Activated B cell treated with CpG ODN at 0.5 μM for 24 hours (primary cell): ENCODE measurements at regions of chr14 and their contacts with region 1.

Region 1: DNA sequence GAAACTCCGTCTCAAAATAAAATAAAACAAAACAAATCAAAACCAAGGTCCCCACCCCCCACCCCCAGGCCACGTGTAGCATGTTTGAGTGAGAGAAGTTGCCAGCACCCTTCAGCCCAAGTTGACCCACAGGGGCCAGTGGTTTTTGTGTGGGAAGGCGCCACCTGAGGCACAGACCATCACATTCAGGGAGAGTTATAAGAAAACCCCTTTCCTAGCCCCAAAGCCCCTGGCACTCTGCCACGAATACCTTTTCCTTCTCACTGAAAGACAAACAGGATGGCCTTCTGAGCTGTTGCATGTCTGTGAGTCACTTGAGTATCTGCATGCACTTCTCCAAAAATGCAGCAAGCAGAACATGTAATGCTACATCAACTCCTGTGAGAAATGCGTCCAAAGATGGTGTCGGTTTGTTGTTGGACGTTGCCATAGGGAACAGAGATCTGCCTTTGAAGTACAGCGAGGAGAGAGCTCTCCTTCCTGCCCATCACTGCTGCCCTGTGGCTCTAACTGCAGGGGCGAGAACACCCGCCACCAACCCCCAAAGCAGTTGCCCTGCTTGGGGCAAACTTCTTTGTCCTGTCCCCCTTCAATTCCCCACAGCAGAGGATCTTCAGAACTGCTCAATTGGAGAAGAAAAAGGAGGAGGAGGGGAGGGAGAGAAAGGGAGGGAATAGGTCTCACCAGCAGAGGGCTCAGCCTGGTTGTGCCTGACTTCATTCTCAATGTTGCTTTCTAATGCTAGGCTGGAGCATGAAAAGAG is 2.7 kb upstream of the TRAF3 start:
- DNase-seq: peak; percentile 64
- ATAC-seq: peak; percentile 53
- H3K4me3 Mint-ChIP-seq: peak overlapping the region; percentile 70
- H3K27ac Mint-ChIP-seq: peak overlapping the region; percentile 96
- H3K4me1 Mint-ChIP-seq: peaks cover 76% of the 10 kb centered on the region
- H3K27me3 Mint-ChIP-seq: no peaks in the 10 kb centered on the region
- CTCF ChIP-seq: no peak

Region 2: DNA sequence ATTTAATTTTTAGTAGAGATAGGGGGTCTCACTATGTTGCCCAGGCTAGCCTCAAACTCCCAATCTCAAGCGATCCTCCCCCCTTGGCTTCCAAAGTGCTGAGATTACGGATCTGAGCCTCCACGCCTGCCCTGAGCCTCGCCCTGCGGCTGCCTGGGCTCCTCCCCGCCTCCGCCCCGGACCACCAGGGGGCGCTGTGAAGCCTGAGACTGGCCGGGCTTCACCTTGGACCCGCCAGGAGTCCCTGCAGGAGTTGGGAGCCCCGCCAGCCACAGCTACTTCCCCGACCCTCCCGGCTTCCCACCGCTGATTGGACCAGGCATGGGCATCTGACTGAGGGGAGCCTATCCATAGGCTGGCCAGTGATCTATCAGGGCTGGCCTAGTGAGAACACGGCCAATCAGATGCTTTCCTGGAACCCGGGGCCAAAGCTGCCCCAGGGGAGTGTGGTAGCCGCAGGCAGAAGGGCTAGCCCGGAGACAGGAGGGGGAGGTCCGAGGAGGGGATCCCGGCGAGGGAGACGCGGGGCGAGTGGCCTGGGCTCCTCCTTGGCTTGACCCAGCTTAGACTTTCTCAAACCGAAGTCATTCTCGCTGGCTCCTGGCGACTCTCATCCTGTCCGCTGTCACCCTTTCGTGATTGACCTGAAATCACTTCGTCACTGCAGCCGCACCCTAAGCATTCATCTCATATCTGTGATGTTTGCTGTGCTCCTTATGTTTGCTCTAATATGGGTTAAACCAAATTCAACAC is 249.9 kb before region 1 on chr14:
- CTCF ChIA-PET with region 1: no interaction called
- POLR2A ChIA-PET with region 1: no interaction called
- intact Hi-C with region 1: loop called (anchors 5 kb)
- DNase-seq: peak; percentile 97
- ATAC-seq: peak; percentile 96
- H3K4me3 Mint-ChIP-seq: peak overlapping the region; percentile 91
- H3K27ac Mint-ChIP-seq: peak overlapping the region; percentile 81
- H3K4me1 Mint-ChIP-seq: peaks cover 28% of the 10 kb centered on the region
- H3K27me3 Mint-ChIP-seq: no peaks in the 10 kb centered on the region
- CTCF ChIP-seq: peak; percentile 61

Region 3: GRCh38 chr14:102738756-102739494 is 35.6 kb before region 1 on chr14:
- CTCF ChIA-PET with region 1: no interaction called
- POLR2A ChIA-PET with region 1: interaction called, 4 read pairs
- intact Hi-C with region 1: loop called (anchors 5 kb)
- DNase-seq: no peak
- ATAC-seq: no peak
- H3K4me3 Mint-ChIP-seq: no peak overlapping the region
- H3K27ac Mint-ChIP-seq: no peak overlapping the region
- H3K4me1 Mint-ChIP-seq: no peaks in the 10 kb centered on the region
- H3K27me3 Mint-ChIP-seq: no peaks in the 10 kb centered on the region
- CTCF ChIP-seq: no peak

Region 4: GRCh38 chr14:102795060-102795925 is 20.7 kb after region 1 on chr14:
- CTCF ChIA-PET with region 1: no interaction called
- POLR2A ChIA-PET with region 1: interaction called, 5 read pairs
- intact Hi-C with region 1: loop called (anchors 2 kb)
- DNase-seq: no peak
- ATAC-seq: peak; percentile 72
- H3K4me3 Mint-ChIP-seq: peak overlapping the region; percentile 47
- H3K27ac Mint-ChIP-seq: peak overlapping the region; percentile 79
- H3K4me1 Mint-ChIP-seq: peaks cover 85% of the 10 kb centered on the region
- H3K27me3 Mint-ChIP-seq: no peaks in the 10 kb centered on the region
- CTCF ChIP-seq: no peak

Region 5: GRCh38 chr14:102819176-102819628 is 44.6 kb after region 1 on chr14:
- CTCF ChIA-PET with region 1: interaction called, 3 read pairs
- POLR2A ChIA-PET with region 1: interaction called, 3 read pairs
- intact Hi-C with region 1: loop called (anchors 2 kb)
- DNase-seq: no peak
- ATAC-seq: peak; percentile 73
- H3K4me3 Mint-ChIP-seq: peak overlapping the region; percentile 68
- H3K27ac Mint-ChIP-seq: peak overlapping the region; percentile 85
- H3K4me1 Mint-ChIP-seq: peaks cover 83% of the 10 kb centered on the region
- H3K27me3 Mint-ChIP-seq: no peaks in the 10 kb centered on the region
- CTCF ChIP-seq: no peak

Region 6: GRCh38 chr14:102917469-102918211 is 143.1 kb after region 1 on chr14:
- CTCF ChIA-PET with region 1: interaction called, 5 read pairs
- POLR2A ChIA-PET with region 1: no interaction called
- intact Hi-C with region 1: loop called (anchors 1 kb)
- DNase-seq: peak; percentile 64
- ATAC-seq: peak; percentile 23
- H3K4me3 Mint-ChIP-seq: no peak overlapping the region
- H3K27ac Mint-ChIP-seq: peak overlapping the region; percentile 42
- H3K4me1 Mint-ChIP-seq: peaks cover 18% of the 10 kb centered on the region
- H3K27me3 Mint-ChIP-seq: no peaks in the 10 kb centered on the region
- CTCF ChIP-seq: no peak